A673 (cell line): ENCODE measurements at regions of chr2 and their contacts with region 1.

Region 1: GRCh38 chr2:6352906-6353515 is 512.7 kb downstream of the CMPK2 start:
- DNase-seq: peak; percentile 81
- H3K4me3 ChIP-seq: no peak overlapping the region
- H3K27ac ChIP-seq: no peak overlapping the region
- H3K4me1 ChIP-seq: peaks cover 6% of the 10 kb centered on the region
- H3K27me3 ChIP-seq: no peaks in the 10 kb centered on the region
- CTCF ChIP-seq: peak; percentile 79

Region 2: DNA sequence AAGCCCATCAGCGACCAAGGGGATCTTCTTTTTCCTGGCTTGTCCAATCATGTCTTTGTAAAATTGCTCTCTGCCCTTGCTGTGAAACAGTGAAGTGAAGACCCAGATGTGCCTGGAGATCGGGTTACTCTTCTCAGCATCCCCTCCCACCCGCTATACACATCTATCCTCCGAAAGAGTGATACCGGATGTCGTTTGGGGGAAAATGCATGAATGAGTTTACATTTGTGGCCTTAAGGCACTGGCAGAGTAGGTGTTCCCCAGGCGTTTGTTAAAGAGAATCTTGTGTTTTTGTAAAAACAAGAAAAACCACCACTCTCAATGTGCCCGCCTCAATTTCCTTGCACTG is 15.6 kb before region 1 on chr2:
- CTCF ChIA-PET with region 1: no interaction called
- POLR2A ChIA-PET with region 1: no interaction called
- intact Hi-C with region 1: no loop called
- DNase-seq: no peak
- H3K4me3 ChIP-seq: no peak overlapping the region
- H3K27ac ChIP-seq: no peak overlapping the region
- H3K4me1 ChIP-seq: no peaks in the 10 kb centered on the region
- H3K27me3 ChIP-seq: no peaks in the 10 kb centered on the region
- CTCF ChIP-seq: no peak

Region 3: DNA sequence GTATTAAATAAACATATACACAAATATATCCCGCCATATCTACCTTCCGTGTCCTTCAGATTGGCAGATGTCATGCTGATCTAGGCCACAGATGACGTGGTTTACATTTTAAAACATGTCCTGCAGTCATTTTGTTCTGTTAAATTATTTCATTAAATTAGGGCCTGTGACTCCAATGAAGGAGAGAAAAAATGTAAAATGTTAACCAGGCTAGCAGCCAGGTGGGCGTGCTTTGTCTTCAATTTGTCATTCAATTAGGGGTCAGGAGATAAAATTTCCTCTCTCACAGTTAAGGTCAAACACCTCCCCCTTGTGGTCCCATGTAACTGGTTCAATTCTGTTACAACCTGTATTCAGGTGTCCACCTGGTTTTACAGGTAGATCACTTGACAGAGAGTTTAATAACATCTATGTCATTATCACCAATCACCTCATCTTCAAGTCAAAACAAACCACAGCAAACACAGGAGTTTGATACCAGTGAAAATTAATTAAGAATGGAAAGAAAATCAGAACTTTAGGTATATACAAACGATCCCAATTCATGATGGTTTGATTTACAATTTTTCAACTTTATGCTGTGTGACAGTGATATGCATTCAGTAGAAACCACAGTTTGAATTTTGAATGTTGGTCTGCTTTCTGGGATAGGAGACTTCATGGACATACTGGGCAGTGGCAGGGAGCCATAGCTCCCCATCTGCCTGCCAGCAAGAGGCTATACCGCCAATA is 173.2 kb after region 1 on chr2:
- CTCF ChIA-PET with region 1: no interaction called
- POLR2A ChIA-PET with region 1: no interaction called
- intact Hi-C with region 1: loop called (anchors 10 kb)
- DNase-seq: peak; percentile 12
- H3K4me3 ChIP-seq: no peak overlapping the region
- H3K27ac ChIP-seq: no peak overlapping the region
- H3K4me1 ChIP-seq: no peaks in the 10 kb centered on the region
- H3K27me3 ChIP-seq: no peaks in the 10 kb centered on the region
- CTCF ChIP-seq: peak; percentile 45; the same call in 1 of the 2 replicates

Region 4: DNA sequence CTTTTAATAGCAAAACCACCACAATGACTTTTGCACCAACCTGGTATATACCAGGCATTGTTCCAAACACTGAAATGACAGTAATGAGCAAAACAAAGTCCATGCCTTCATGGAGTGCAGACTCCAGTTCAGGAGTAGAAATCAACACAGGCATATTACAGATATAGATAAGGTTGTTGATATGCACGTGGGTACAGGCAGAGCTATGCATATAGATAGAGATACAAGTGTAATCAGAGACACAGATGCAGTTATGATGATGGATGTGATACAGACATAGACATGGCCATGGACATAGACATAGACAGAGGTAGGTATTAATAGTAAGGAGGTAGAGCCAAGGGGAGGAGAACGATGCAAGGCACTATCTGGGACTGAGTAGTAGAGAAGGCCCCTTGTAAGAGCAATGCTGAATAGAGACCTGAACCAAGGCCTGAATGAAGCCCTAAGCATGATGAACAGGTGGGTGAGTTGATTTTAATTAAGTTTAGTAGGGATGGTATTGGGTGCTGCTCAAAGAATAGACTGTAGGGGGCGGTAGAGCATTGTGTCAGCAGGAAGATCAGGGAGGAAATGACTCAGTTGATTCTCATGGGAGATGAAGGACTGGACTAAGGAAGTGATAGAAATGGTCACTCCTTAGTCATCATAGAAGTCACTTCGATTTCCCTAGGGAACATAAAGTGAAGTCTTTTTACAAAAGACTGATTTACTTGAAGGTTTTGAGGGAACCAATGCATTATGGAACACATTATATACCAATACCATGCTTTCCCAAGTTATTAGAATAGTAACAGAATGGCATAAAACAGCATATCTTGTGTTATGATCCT is 473.3 kb after region 1 on chr2:
- CTCF ChIA-PET with region 1: no interaction called
- POLR2A ChIA-PET with region 1: no interaction called
- intact Hi-C with region 1: loop called (anchors 2 kb)
- DNase-seq: peak; percentile 84
- H3K4me3 ChIP-seq: no peak overlapping the region
- H3K27ac ChIP-seq: no peak overlapping the region
- H3K4me1 ChIP-seq: peaks cover 18% of the 10 kb centered on the region
- H3K27me3 ChIP-seq: no peaks in the 10 kb centered on the region
- CTCF ChIP-seq: peak; percentile 85